ENCODE measurements at regions of chr11 and their contacts with region 1.

Region 1: DNA sequence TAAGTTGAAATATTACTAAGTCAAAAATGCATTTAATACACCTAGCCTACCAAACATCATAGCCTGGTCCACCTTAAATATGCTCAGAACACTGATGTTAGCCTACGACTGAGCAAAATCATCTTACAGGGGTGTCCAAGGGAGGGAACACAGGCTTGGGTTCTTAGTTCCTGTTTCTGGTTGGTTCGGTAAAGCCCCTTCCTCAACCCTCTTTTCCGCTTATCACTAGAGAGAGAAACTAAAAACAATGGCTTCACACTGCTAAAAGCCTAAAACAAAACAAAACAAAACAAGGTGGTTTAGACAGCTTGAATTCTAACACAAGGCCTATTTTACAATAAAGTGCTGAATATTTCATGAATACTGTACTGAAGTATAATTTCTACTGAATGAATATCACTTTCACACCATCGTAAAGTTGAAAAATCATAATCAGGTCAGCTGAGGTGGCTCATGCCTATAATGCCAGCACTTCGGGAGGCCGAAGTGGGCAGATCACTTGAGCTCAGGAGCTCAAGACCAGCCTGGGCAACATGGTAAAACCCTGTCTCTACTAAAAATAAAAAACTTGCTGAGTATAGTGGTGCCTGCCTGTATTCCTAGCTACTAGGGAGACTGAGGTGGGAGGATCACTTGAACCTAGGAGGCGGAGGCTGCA is 118.0 kb downstream of the SIK3 start:
- DNase-seq: peak; percentile 88
- ATAC-seq: peak; percentile 97
- H3K4me3 ChIP-seq: peak overlapping the region; percentile 11 to 65 (median 49)
- H3K4me3 Mint-ChIP-seq: peak overlapping the region; percentile 85
- H3K27ac ChIP-seq: peak overlapping the region; percentile 91 to 94
- H3K27ac Mint-ChIP-seq: peak overlapping the region; percentile 95
- H3K4me1 ChIP-seq: peaks cover 62 to 66% of the 10 kb centered on the region in 2 donors
- H3K4me1 Mint-ChIP-seq: peaks cover 63% of the 10 kb centered on the region
- H3K27me3 ChIP-seq: no peaks in the 10 kb centered on the region
- H3K27me3 Mint-ChIP-seq: no peaks in the 10 kb centered on the region
- CTCF ChIP-seq: no peak

Region 2: DNA sequence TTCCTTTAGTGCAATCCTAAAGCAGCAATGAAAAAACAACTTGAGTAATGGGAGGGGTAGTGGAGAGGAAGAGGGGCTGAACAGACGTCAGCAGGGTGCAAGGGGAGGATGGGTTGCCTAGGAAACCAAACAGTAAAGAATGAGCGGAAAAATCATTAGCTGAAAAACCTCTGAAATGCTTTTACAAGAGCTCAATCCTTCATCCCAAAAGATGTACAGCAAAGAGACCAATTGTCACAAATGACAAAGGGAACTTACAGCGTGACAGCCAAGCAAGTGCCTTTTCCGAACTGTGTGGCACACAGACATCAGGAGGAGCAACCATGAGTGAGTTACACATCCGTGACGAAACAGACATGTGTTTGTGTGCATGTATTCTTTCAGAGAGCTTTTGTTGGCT is 13.3 kb after region 1 on chr11:
- CTCF ChIA-PET with region 1: interaction called, 4 read pairs
- POLR2A ChIA-PET with region 1: no interaction called
- intact Hi-C with region 1: loop called (anchors 1 kb)
- DNase-seq: peak; percentile 82
- ATAC-seq: peak; percentile 53
- H3K4me3 ChIP-seq: peak overlapping the region in 2 of 5 experiments; percentile 15 to 25
- H3K4me3 Mint-ChIP-seq: peak overlapping the region; percentile 80
- H3K27ac ChIP-seq: peak overlapping the region; percentile 30 to 75
- H3K27ac Mint-ChIP-seq: peak overlapping the region; percentile 92
- H3K4me1 ChIP-seq: peaks cover 30 to 47% of the 10 kb centered on the region in 2 donors
- H3K4me1 Mint-ChIP-seq: peaks cover 64% of the 10 kb centered on the region
- H3K27me3 ChIP-seq: no peaks in the 10 kb centered on the region
- H3K27me3 Mint-ChIP-seq: no peaks in the 10 kb centered on the region
- CTCF ChIP-seq: no peak

Region 3: GRCh38 chr11:117058761-117059261 is 78.5 kb after region 1 on chr11:
- CTCF ChIA-PET with region 1: no interaction called
- POLR2A ChIA-PET with region 1: interaction called, 4 read pairs
- intact Hi-C with region 1: loop called (anchors 1 kb)
- DNase-seq: no peak
- ATAC-seq: no peak
- H3K4me3 ChIP-seq: no peak overlapping the region
- H3K4me3 Mint-ChIP-seq: peak overlapping the region; percentile 10
- H3K27ac ChIP-seq: no peak overlapping the region
- H3K27ac Mint-ChIP-seq: no peak overlapping the region
- H3K4me1 ChIP-seq: peaks cover 42 to 55% of the 10 kb centered on the region in 2 donors
- H3K4me1 Mint-ChIP-seq: peaks cover 77% of the 10 kb centered on the region
- H3K27me3 ChIP-seq: no peaks in the 10 kb centered on the region
- H3K27me3 Mint-ChIP-seq: no peaks in the 10 kb centered on the region
- CTCF ChIP-seq: no peak

Measured in B cell (primary cell).